ENCODE measurements at regions of chr6 and their contacts with region 1.

Region 1: GRCh38 chr6:43769526-43770416 is at the start of gene VEGFA:
- DNase-seq: peak; percentile 98
- H3K4me3 ChIP-seq: peak within 1 kb of the TSS; percentile 94 to 95
- H3K27ac ChIP-seq: peak within 1 kb of the TSS; percentile 85 to 94
- H3K4me1 ChIP-seq: peaks cover 16 to 50% of the 10 kb centered on the region in 2 experiments
- H3K27me3 ChIP-seq: no peaks in the 10 kb centered on the region
- CTCF ChIP-seq: peak; percentile 99
- EP300 ChIP-seq: no peak; a peak in 1 of 4 replicates
- RAD21 ChIP-seq: peak; percentile 93
- polyA plus RNA-seq, gene VEGFA: 81.0 and 130 TPM in 2 replicates

Region 2: GRCh38 chr6:43496370-43497128 is 273.2 kb before region 1 on chr6:
- CTCF ChIA-PET with region 1: no interaction called
- POLR2A ChIA-PET with region 1: no interaction called
- DNase-seq: peak; percentile 80
- H3K4me3 ChIP-seq: no peak overlapping the region
- H3K27ac ChIP-seq: peak overlapping the region in 1 of 2 experiments; percentile 5; a peak in 1 of 4 replicates
- H3K4me1 ChIP-seq: peaks cover 14 to 43% of the 10 kb centered on the region in 2 experiments; a peak in 3 of 4 replicates
- H3K27me3 ChIP-seq: no peaks in the 10 kb centered on the region
- CTCF ChIP-seq: peak; percentile 51
- EP300 ChIP-seq: no peak
- RAD21 ChIP-seq: peak; percentile 69

Region 3: GRCh38 chr6:43739642-43740091 is 30.1 kb before region 1 on chr6:
- CTCF ChIA-PET with region 1: interaction called, 45 read pairs
- POLR2A ChIA-PET with region 1: interaction called, 4 read pairs
- DNase-seq: peak; percentile 62
- H3K4me3 ChIP-seq: no peak overlapping the region
- H3K27ac ChIP-seq: no peak overlapping the region
- H3K4me1 ChIP-seq: peaks cover 0 to 22% of the 10 kb centered on the region in 2 experiments; a peak in 1 of 4 replicates
- H3K27me3 ChIP-seq: no peaks in the 10 kb centered on the region
- CTCF ChIP-seq: no peak
- EP300 ChIP-seq: 0 out of 4 replicates have a peak, but pooled peaks of 1 of the 2 experiments have one; percentile 24
- RAD21 ChIP-seq: no peak

Region 4: DNA sequence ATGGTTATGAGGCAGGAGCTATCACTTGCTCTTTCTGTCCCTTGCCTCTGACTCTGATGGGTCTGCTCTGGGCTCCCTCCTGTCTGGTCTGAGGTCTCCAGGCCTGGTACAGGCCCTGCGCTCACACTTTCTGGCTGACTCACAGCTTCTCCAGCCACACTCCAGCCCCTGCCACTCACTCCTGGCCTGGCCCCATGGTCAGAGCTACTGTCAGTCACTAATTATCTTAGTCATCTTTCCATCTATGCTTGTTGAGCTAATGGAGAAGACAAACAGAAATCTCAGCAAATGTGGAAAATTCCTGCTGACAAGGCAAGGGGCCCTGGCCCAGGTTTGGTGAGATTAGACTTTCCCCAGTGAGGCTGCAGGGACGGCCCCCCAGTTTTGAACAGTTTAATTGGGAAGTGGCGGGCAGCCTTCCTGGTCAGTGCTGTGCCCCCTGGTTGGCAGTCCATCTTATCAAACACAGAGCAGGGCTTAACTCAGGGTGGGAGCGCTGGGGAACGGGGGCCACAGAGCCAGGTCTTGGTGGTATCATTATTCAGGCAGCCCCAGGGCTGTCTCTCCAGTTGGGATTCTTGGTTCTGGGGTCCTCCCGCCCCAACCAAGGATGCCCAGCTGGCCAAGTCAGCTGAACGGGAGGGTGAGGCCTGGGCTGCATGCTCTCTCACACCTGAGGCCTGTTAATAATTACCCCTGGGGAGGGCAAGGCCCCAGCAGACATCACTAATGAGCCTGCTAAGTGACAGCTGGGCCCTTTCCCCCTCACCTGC is 63.6 kb after region 1 on chr6:
- CTCF ChIA-PET with region 1: interaction called, 26 read pairs
- POLR2A ChIA-PET with region 1: interaction called, 3 read pairs
- DNase-seq: peak; percentile 61
- H3K4me3 ChIP-seq: no peak overlapping the region
- H3K27ac ChIP-seq: peak overlapping the region in 1 of 2 experiments; percentile 30; a peak in 1 of 4 replicates
- H3K4me1 ChIP-seq: peaks cover 1 to 30% of the 10 kb centered on the region in 2 experiments; a peak in 2 of 4 replicates
- H3K27me3 ChIP-seq: no peaks in the 10 kb centered on the region
- CTCF ChIP-seq: no peak
- EP300 ChIP-seq: no peak
- RAD21 ChIP-seq: no peak

Region 5: DNA sequence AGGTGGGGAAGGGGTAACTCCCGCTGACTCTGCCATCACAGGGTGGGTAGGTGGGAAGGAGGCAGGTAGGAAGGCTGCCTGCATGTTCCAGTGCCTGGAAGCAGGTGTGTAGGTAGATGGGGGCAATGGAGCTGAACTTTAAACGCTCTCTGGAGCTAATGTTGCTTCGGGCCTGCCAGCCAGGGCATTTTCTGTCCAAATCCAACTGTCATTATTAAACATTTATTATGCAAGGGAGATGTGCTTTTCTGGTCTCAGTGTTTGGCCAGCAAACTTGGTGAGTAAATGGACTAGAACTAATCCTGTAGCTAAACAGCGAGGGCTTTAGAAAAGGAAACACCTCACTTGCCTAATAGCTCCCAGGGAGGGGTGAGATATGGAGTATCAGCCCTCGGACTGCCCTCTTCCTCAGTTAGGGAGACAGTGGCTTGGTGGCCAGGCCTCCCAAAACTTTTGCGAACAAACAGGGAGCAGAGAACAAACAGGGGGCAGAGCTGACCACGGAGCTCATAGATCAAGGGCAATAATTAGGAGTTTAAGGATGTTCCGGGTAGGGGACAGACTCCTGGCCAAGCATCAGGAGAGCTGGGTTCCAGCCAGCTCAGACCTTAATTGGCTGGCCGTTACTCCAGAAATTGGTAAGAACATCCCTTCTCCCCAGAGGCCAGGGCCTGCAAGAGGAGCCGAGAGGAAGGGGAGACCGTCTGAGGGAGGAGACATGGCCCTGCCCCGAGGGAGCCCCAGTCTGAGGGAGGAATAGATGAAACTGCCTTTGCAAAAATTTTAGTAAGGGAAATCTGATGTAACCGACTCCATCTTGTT is 131.4 kb after region 1 on chr6:
- CTCF ChIA-PET with region 1: interaction called, 18 read pairs
- POLR2A ChIA-PET with region 1: interaction called, 5 read pairs
- DNase-seq: no peak
- H3K4me3 ChIP-seq: no peak overlapping the region
- H3K27ac ChIP-seq: peak overlapping the region in 1 of 2 experiments; percentile 91; a peak in 2 of 4 replicates
- H3K4me1 ChIP-seq: peaks cover 0 to 61% of the 10 kb centered on the region in 2 experiments; a peak in 2 of 4 replicates
- H3K27me3 ChIP-seq: no peaks in the 10 kb centered on the region
- CTCF ChIP-seq: no peak
- EP300 ChIP-seq: no peak
- RAD21 ChIP-seq: no peak

Region 6: GRCh38 chr6:43972913-43973300 is 203.1 kb after region 1 on chr6:
- CTCF ChIA-PET with region 1: interaction called, 18 read pairs
- POLR2A ChIA-PET with region 1: interaction called, 3 read pairs
- DNase-seq: no peak
- H3K4me3 ChIP-seq: no peak overlapping the region
- H3K27ac ChIP-seq: peak overlapping the region; percentile 42 to 81
- H3K4me1 ChIP-seq: peaks cover 9 to 43% of the 10 kb centered on the region in 2 experiments; a peak in 3 of 4 replicates
- H3K27me3 ChIP-seq: no peaks in the 10 kb centered on the region
- CTCF ChIP-seq: no peak
- EP300 ChIP-seq: no peak
- RAD21 ChIP-seq: no peak

Region 7: DNA sequence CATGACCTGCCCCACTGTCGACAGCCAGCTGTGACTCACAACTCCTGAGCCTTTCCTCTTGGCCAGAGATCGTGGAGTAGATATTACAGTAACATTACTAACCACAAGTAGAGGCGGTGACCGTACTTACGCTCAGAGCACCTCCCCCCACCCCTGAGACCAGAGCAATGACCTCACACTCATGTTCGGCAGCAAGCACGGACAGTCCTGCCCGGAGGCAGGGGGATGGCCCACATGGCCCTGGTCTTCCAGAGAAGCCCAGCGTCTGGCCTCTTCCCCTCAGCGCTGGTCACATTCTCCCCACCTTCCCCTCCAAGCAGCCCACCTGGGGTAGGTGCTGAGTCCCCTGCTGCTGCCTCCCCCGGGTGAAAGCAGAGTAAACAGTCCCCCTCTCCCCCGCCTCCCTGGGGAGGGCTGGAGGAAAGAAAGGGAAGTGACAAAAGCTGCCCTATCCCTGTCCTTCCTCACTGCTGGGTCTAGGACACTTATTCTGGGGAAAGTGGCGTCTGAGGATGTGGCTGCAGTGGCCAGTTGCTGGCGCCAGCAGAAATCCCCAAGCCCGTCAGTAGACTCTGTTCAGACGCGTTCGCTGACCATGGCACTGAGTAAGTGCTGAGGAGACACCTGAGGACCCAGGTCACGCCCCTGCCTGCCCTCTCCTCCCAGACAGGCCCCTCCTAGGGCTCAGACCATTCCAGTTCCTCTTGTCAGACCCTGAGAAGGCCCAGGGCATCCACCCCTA is 289.0 kb after region 1 on chr6:
- CTCF ChIA-PET with region 1: interaction called, 32 read pairs
- POLR2A ChIA-PET with region 1: interaction called, 14 read pairs
- DNase-seq: peak; percentile 81
- H3K4me3 ChIP-seq: no peak overlapping the region; a peak in 1 of 4 replicates
- H3K27ac ChIP-seq: peak overlapping the region; percentile 92 to 100
- H3K4me1 ChIP-seq: peaks cover 62 to 82% of the 10 kb centered on the region in 2 experiments
- H3K27me3 ChIP-seq: no peaks in the 10 kb centered on the region
- CTCF ChIP-seq: no peak
- EP300 ChIP-seq: peak; percentile 89 to 93
- RAD21 ChIP-seq: peak; percentile 43

Region 8: GRCh38 chr6:44086931-44087574 is 317.3 kb after region 1 on chr6:
- CTCF ChIA-PET with region 1: interaction called, 212 read pairs
- POLR2A ChIA-PET with region 1: interaction called, 16 read pairs
- DNase-seq: peak; percentile 80
- H3K4me3 ChIP-seq: no peak overlapping the region
- H3K27ac ChIP-seq: peak overlapping the region in 1 of 2 experiments; percentile 86; a peak in 2 of 4 replicates
- H3K4me1 ChIP-seq: peaks cover 0 to 51% of the 10 kb centered on the region in 2 experiments; a peak in 2 of 4 replicates
- H3K27me3 ChIP-seq: no peaks in the 10 kb centered on the region
- CTCF ChIP-seq: no peak
- EP300 ChIP-seq: no peak; a peak in 1 of 4 replicates
- RAD21 ChIP-seq: peak; percentile 42; the same call in 1 of the 2 replicates

Region 9: GRCh38 chr6:44446628-44447306 is 677.0 kb after region 1 on chr6:
- CTCF ChIA-PET with region 1: no interaction called
- POLR2A ChIA-PET with region 1: no interaction called
- DNase-seq: no peak
- H3K4me3 ChIP-seq: no peak overlapping the region
- H3K27ac ChIP-seq: peak overlapping the region; percentile 28 to 53; a peak in 3 of 4 replicates
- H3K4me1 ChIP-seq: peaks cover 8 to 18% of the 10 kb centered on the region in 2 experiments
- H3K27me3 ChIP-seq: no peaks in the 10 kb centered on the region
- CTCF ChIP-seq: no peak
- EP300 ChIP-seq: 0 out of 4 replicates have a peak, but pooled peaks of 1 of the 2 experiments have one; percentile 8
- RAD21 ChIP-seq: no peak